CD14-positive monocyte (primary cell): ENCODE measurements at regions of chr3 and their contacts with region 1.

Region 1: GRCh38 chr3:139329345-139329850 is 14.4 kb upstream of the MRPS22 start:
- DNase-seq: peak; percentile 80 to 86 (median 82)
- H3K4me3 ChIP-seq: peak overlapping the region in 1 of 3 experiments; percentile 37
- H3K4me3 Mint-ChIP-seq: peak overlapping the region in 1 of 2 donors; percentile 65
- H3K27ac ChIP-seq: no peak overlapping the region
- H3K27ac Mint-ChIP-seq: no peak overlapping the region
- H3K4me1 ChIP-seq: peaks cover 0 to 7% of the 10 kb centered on the region in 2 donors
- H3K4me1 Mint-ChIP-seq: peaks cover 8% of the 10 kb centered on the region
- H3K27me3 ChIP-seq: peaks cover 0 to 2% of the 10 kb centered on the region in 2 donors
- H3K27me3 Mint-ChIP-seq: peaks cover 2 to 20% (median 10%) of the 10 kb centered on the region in 3 donors
- CTCF ChIP-seq: peak; percentile 100

Region 2: GRCh38 chr3:138935848-138936740 is 393.3 kb before region 1 on chr3:
- intact Hi-C with region 1: loop called (anchors 2 to 5 kb)
- DNase-seq: peak; percentile 41 to 58 (median 51)
- H3K4me3 ChIP-seq: peak overlapping the region; percentile 0 to 69 (median 15)
- H3K4me3 Mint-ChIP-seq: peak overlapping the region; percentile 72 to 92
- H3K27ac ChIP-seq: no peak overlapping the region
- H3K27ac Mint-ChIP-seq: no peak overlapping the region
- H3K4me1 ChIP-seq: peaks cover 43 to 45% of the 10 kb centered on the region in 2 donors
- H3K4me1 Mint-ChIP-seq: peaks cover 43% of the 10 kb centered on the region
- H3K27me3 ChIP-seq: peaks cover 60 to 83% of the 10 kb centered on the region in 2 donors
- H3K27me3 Mint-ChIP-seq: peaks cover 72 to 91% (median 82%) of the 10 kb centered on the region in 3 donors
- CTCF ChIP-seq: peak; percentile 99

Region 3: DNA sequence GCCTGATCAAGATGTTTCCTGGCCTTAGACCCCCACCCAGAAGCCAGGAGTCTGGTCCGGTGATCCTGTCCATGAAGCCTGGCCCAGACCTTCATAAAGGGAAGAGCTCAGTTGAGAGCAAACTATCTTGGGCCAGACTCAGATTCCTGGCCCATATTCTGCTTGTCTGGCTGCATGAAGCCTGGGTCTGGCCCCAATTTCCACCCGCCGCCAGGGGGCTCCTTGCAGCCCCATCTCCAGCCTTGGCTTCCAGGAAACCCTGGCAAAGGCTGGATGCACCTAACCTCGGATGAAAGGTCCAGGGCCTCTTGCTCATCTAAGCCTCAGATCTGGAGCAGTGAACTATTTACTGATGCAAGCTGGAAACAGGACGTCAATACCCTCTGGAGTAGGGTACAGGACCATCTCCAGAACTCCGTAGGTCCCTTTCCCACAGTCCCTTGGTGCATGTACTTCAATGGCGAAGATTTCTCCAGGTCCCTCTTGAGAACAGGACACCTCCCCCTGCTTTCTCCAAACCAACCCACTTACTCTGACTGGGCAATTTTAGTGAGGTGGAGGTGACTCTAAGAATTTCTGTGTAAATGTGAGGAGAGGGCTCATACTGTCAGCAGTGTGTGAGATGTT is 388.0 kb before region 1 on chr3:
- intact Hi-C with region 1: loop called (anchors 2 to 5 kb)
- DNase-seq: peak in 1 of 3 donors; percentile 39
- H3K4me3 ChIP-seq: no peak overlapping the region
- H3K4me3 Mint-ChIP-seq: peak overlapping the region in 1 of 2 donors; percentile 97
- H3K27ac ChIP-seq: no peak overlapping the region
- H3K27ac Mint-ChIP-seq: no peak overlapping the region
- H3K4me1 ChIP-seq: peaks cover 51 to 62% of the 10 kb centered on the region in 2 donors
- H3K4me1 Mint-ChIP-seq: peaks cover 57% of the 10 kb centered on the region
- H3K27me3 ChIP-seq: peaks cover 93 to 94% of the 10 kb centered on the region in 2 donors
- H3K27me3 Mint-ChIP-seq: peaks cover 92 to 99% (median 95%) of the 10 kb centered on the region in 3 donors
- CTCF ChIP-seq: peak; percentile 48

Region 4: GRCh38 chr3:139101396-139101795 is 228.0 kb before region 1 on chr3:
- intact Hi-C with region 1: no loop called
- DNase-seq: no peak
- H3K4me3 ChIP-seq: no peak overlapping the region
- H3K4me3 Mint-ChIP-seq: no peak overlapping the region
- H3K27ac ChIP-seq: no peak overlapping the region
- H3K27ac Mint-ChIP-seq: no peak overlapping the region
- H3K4me1 ChIP-seq: no peaks in the 10 kb centered on the region
- H3K4me1 Mint-ChIP-seq: no peaks in the 10 kb centered on the region
- H3K27me3 ChIP-seq: no peaks in the 10 kb centered on the region
- H3K27me3 Mint-ChIP-seq: peaks cover 3 to 6% (median 4%) of the 10 kb centered on the region in 3 donors
- CTCF ChIP-seq: no peak

Region 5: GRCh38 chr3:139111392-139112229 is 217.8 kb before region 1 on chr3:
- intact Hi-C with region 1: loop called (anchors 5 kb)
- DNase-seq: peak; percentile 4 to 30 (median 18)
- H3K4me3 ChIP-seq: no peak overlapping the region
- H3K4me3 Mint-ChIP-seq: no peak overlapping the region
- H3K27ac ChIP-seq: no peak overlapping the region
- H3K27ac Mint-ChIP-seq: no peak overlapping the region
- H3K4me1 ChIP-seq: no peaks in the 10 kb centered on the region
- H3K4me1 Mint-ChIP-seq: peaks cover 7% of the 10 kb centered on the region
- H3K27me3 ChIP-seq: no peaks in the 10 kb centered on the region
- H3K27me3 Mint-ChIP-seq: peaks cover 0 to 2% (median 2%) of the 10 kb centered on the region in 3 donors
- CTCF ChIP-seq: peak; percentile 73

Region 6: DNA sequence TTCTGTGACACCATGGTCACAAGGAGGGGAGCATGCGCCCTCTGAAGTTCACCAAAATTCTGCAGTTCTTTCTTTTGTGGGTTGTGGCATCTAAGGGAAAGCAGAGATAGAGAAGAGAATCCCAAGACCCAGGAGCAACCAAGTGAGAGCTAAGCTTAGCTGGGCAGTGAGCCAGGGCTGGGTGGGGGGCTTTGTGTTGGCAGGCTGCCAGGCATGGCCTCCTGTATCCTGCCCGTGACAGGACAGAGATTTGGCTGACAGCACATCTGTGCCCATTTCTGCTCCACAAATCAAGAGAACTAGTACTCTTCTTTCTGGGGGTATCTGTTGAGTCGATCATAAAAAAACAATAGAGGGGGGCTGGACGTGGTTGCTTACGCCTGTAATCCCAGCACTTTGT is 282.1 kb after region 1 on chr3:
- intact Hi-C with region 1: no loop called
- DNase-seq: no peak
- H3K4me3 ChIP-seq: no peak overlapping the region
- H3K4me3 Mint-ChIP-seq: no peak overlapping the region
- H3K27ac ChIP-seq: no peak overlapping the region
- H3K27ac Mint-ChIP-seq: peak overlapping the region in 1 of 7 donors; percentile 31
- H3K4me1 ChIP-seq: no peaks in the 10 kb centered on the region
- H3K4me1 Mint-ChIP-seq: peaks cover 5% of the 10 kb centered on the region
- H3K27me3 ChIP-seq: no peaks in the 10 kb centered on the region
- H3K27me3 Mint-ChIP-seq: no peaks in the 10 kb centered on the region
- CTCF ChIP-seq: no peak

Region 7: GRCh38 chr3:139689122-139689521 is 359.7 kb after region 1 on chr3:
- intact Hi-C with region 1: no loop called
- DNase-seq: no peak
- H3K4me3 ChIP-seq: no peak overlapping the region
- H3K4me3 Mint-ChIP-seq: no peak overlapping the region
- H3K27ac ChIP-seq: no peak overlapping the region
- H3K27ac Mint-ChIP-seq: no peak overlapping the region
- H3K4me1 ChIP-seq: no peaks in the 10 kb centered on the region
- H3K4me1 Mint-ChIP-seq: peaks cover 14% of the 10 kb centered on the region
- H3K27me3 ChIP-seq: no peaks in the 10 kb centered on the region
- H3K27me3 Mint-ChIP-seq: peaks cover 0 to 12% (median 4%) of the 10 kb centered on the region in 3 donors
- CTCF ChIP-seq: no peak

Region 8: GRCh38 chr3:139751789-139752188 is 422.4 kb after region 1 on chr3:
- intact Hi-C with region 1: no loop called
- DNase-seq: no peak
- H3K4me3 ChIP-seq: no peak overlapping the region
- H3K4me3 Mint-ChIP-seq: no peak overlapping the region
- H3K27ac ChIP-seq: no peak overlapping the region
- H3K27ac Mint-ChIP-seq: no peak overlapping the region
- H3K4me1 ChIP-seq: no peaks in the 10 kb centered on the region
- H3K4me1 Mint-ChIP-seq: no peaks in the 10 kb centered on the region
- H3K27me3 ChIP-seq: no peaks in the 10 kb centered on the region
- H3K27me3 Mint-ChIP-seq: peaks cover 0 to 5% (median 1%) of the 10 kb centered on the region in 3 donors
- CTCF ChIP-seq: no peak